ENCODE measurements at regions of chr2 and their contacts with region 1.

Region 1: DNA sequence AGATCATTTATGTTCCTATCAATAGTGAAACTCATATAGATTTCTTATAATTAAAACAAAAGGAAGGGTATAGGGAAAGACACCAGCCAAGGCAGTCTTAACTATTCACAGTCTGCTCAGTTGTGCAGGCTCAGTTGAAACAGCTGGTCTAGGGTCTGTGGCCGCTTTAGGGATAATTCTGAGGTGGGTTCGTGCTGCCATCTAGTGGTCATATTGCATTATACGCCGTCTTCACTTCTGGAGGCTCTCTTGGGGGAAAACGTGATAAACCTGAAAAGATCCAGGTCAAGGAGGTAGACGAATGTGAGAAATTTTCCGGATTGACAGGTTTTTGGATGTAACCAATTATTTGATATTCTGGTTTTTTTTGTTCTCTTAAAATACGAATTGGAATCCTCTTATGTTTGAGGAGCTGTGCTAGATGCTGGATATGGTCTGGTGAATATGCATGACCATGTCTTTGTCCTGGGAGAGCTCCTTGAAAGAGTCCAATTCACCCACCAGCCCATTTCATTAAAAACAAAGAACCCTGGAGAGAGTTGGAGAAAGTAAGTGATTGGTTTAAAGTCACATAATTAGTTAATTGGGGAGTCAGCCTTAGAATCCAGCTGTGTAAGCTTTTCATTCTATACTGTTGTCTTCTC is 492.4 kb downstream of the PLCL1 start:
- DNase-seq: peak in 8 of 10 donors; percentile 37 to 76 (median 56)
- H3K4me3 ChIP-seq: peak overlapping the region in 8 of 59 donors; percentile 3 to 47 (median 18)
- H3K27ac ChIP-seq: no peak overlapping the region
- H3K27me3 ChIP-seq: no peaks in the 10 kb centered on the region
- CTCF ChIP-seq: peak; percentile 74 to 98 (median 91)

Region 2: GRCh38 chr2:198127627-198128026 is 169.2 kb before region 1 on chr2:
- intact Hi-C with region 1: loop called (anchors 10 kb)
- DNase-seq: peak in 1 of 10 donors; percentile 43
- H3K4me3 ChIP-seq: no peak overlapping the region
- H3K27ac ChIP-seq: no peak overlapping the region
- H3K27me3 ChIP-seq: no peaks in the 10 kb centered on the region
- CTCF ChIP-seq: peak; percentile 28 to 79 (median 60)

Region 3: GRCh38 chr2:199228887-199229819 is 932.4 kb after region 1 on chr2:
- intact Hi-C with region 1: no loop called
- DNase-seq: no peak
- H3K4me3 ChIP-seq: no peak overlapping the region
- H3K27ac ChIP-seq: no peak overlapping the region
- H3K27me3 ChIP-seq: no peaks in the 10 kb centered on the region
- CTCF ChIP-seq: no peak

Measured in dorsolateral prefrontal cortex (tissue), 120 donors.